ENCODE measurements at regions of chr21 and their contacts with region 1.

Region 1: DNA sequence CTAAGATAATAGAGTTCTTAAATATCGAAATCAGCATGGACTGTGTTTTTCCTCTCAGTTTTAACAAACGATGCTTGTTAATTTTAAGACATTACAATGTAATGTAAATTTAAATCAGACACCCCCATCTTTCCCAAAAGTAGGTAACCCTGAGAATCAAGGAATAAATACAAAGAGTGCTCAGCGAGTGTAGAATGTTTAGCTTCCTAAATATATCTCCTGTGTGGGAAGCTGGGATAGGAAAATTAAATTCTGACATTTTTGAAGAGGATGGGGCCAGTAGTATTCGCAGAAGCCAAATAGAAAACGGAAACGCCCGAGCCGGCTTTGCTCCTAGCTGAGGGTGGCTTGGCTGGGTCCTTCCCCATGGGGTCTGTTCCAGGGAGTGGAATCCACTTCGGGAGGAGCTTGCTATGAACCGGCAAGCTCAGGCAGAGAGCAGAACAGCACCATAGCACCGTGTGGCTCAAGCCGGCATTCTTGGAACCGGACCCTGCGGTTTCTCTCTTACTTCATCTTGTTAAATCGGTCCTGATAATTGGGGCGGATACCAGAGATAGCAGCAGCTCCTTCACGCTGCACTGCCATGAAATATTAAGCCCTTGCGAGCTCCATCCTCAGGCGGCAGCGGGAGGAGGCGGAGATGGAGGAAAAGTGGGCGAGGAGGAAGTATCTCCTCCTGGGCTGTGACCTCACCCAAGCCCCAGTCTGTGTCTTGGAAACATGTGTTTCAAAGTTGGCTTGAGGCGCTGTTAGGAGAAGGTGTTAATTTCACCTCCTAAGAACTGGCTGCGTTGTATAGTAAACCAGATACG is 24.9 kb downstream of the MAP3K7CL start:
- DNase-seq: peak; percentile 71 to 75
- ATAC-seq: peak; percentile 88 to 89
- H3K4me3 ChIP-seq: peak overlapping the region; percentile 37 to 47 (median 43)
- H3K27ac ChIP-seq: peak overlapping the region; percentile 80 to 89 (median 86)
- H3K4me1 ChIP-seq: peaks cover 45 to 47% of the 10 kb centered on the region in 2 donors
- H3K27me3 ChIP-seq: no peaks in the 10 kb centered on the region
- CTCF ChIP-seq: peak in 1 of 5 experiments; percentile 28
- POLR2A ChIP-seq: peak in 1 of 2 donors; percentile 49

Region 2: DNA sequence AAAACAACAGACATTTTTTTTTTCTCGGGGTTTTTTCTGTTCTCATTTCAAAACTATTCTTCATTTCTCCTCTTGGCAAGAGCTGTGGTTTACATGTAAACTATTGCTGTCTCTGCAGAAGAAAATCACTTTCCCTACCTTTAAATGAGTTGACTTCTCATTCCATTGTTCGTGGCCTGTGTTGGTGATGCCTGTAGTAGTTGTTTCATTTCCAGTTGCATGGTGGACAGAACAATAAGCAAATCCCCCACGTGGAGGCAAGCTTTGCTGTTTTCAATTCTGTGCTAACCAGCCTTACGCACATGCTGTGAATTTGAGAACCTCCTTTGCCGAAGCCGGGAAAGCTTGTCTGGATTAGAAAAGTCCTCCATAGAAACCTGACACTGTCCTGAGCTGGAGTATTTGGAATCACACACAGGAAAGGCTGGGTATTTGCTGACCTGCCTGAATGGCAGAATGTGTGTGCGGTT is 51.1 kb before region 1 on chr21:
- in situ Hi-C with region 1: no loop called
- intact Hi-C with region 1: loop called (anchors 5 kb)
- DNase-seq: peak; percentile 17 to 53
- ATAC-seq: peak; percentile 93 to 96
- H3K4me3 ChIP-seq: no peak overlapping the region
- H3K27ac ChIP-seq: peak overlapping the region; percentile 2 to 44 (median 20)
- H3K4me1 ChIP-seq: peaks cover 11 to 13% of the 10 kb centered on the region in 2 donors
- H3K27me3 ChIP-seq: no peaks in the 10 kb centered on the region
- CTCF ChIP-seq: peak in 1 of 5 experiments; percentile 27
- POLR2A ChIP-seq: no peak

Region 3: DNA sequence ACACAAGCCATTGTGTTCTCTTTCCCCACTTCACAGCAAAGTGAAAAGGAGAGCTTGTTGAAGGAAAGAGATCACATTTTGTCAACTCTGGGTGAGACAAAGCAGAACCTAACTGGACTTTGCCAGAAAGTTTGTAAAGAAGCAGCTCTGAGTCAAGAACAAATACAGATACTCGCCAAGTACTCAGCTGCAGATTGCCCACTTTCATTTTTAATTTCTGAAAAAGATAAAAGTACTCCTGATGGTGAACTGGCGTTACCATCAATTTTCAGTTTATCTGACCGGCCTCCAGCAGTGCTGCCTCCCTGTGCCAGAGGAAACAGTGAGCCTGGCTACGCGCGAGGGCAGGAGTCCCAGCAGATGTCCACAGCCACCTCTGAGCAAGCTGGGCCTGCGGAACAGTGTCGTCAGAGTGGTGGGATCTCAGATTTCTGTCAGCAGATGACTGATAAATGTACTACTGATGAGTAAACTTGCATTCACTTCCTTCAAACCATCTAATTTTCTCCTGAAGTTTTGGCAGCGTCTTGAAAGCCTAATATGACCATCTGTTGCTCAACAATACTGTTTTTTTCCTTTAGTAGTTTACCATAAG is 187.1 kb after region 1 on chr21:
- in situ Hi-C with region 1: no loop called
- intact Hi-C with region 1: loop called (anchors 5 kb)
- DNase-seq: peak; percentile 93 to 94
- ATAC-seq: peak; percentile 97 to 98
- H3K4me3 ChIP-seq: peak overlapping the region in 1 of 4 donors; percentile 1
- H3K27ac ChIP-seq: peak overlapping the region; percentile 82 to 90 (median 84)
- H3K4me1 ChIP-seq: peaks cover 62 to 83% of the 10 kb centered on the region in 2 donors
- H3K27me3 ChIP-seq: no peaks in the 10 kb centered on the region
- CTCF ChIP-seq: no peak
- POLR2A ChIP-seq: peak; percentile 29 to 41

Measured in gastrocnemius medialis (tissue), 4 donors.